ENCODE measurements at regions of chr1 and their contacts with region 1.

Region 1: GRCh38 chr1:202765721-202766120 is 42.5 kb downstream of the KDM5B start:
- DNase-seq: no peak
- ATAC-seq: no peak
- H3K4me3 ChIP-seq: no peak overlapping the region
- H3K4me3 Mint-ChIP-seq: no peak overlapping the region
- H3K27ac ChIP-seq: no peak overlapping the region
- H3K27ac Mint-ChIP-seq: no peak overlapping the region
- H3K4me1 ChIP-seq: no peaks in the 10 kb centered on the region
- H3K4me1 Mint-ChIP-seq: no peaks in the 10 kb centered on the region
- H3K27me3 ChIP-seq: no peaks in the 10 kb centered on the region
- H3K27me3 Mint-ChIP-seq: no peaks in the 10 kb centered on the region

Region 2: GRCh38 chr1:201982623-201983379 is 782.9 kb before region 1 on chr1 and contains the start of gene RNPEP:
- CTCF ChIA-PET with region 1: no interaction called
- POLR2A ChIA-PET with region 1: no interaction called
- DNase-seq: peak; percentile 18 to 68 (median 45)
- ATAC-seq: peak; percentile 83 to 87 (median 84)
- H3K4me3 ChIP-seq: peak within 1 kb of the TSS; percentile 66 to 90
- H3K4me3 Mint-ChIP-seq: peak within 1 kb of the TSS; percentile 92 to 99 (median 97)
- H3K27ac ChIP-seq: peak within 1 kb of the TSS; percentile 35
- H3K27ac Mint-ChIP-seq: peak within 1 kb of the TSS; percentile 91 to 94
- H3K4me1 ChIP-seq: peaks cover 0 to 11% of the 10 kb centered on the region in 2 experiments
- H3K4me1 Mint-ChIP-seq: peaks cover 24 to 33% (median 26%) of the 10 kb centered on the region in 3 donors
- H3K27me3 ChIP-seq: no peaks in the 10 kb centered on the region
- H3K27me3 Mint-ChIP-seq: no peaks in the 10 kb centered on the region
- total RNA-seq, gene RNPEP: 20.1 to 30.4 (median 23.9) TPM

Region 3: DNA sequence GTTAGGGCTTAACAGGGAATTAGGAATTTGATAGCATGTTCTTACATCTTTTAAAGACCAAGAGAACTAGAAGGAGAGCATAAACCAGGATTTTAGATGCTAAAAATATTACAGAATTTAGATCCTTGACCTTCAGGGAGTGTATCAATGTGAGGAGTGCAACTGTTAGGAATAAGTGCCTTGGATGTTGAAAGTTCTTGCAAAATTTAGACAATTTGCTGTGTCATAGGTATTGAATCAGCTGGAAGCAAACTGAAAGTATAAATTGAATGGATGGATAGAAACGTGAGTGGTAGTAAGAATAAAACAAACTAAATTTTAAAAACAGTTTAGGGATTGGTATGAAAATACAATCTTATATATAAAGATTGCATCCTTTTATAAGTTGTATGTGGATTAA is 389.5 kb before region 1 on chr1:
- CTCF ChIA-PET with region 1: no interaction called
- POLR2A ChIA-PET with region 1: no interaction called
- DNase-seq: no peak
- ATAC-seq: no peak
- H3K4me3 ChIP-seq: no peak overlapping the region
- H3K4me3 Mint-ChIP-seq: no peak overlapping the region
- H3K27ac ChIP-seq: no peak overlapping the region
- H3K27ac Mint-ChIP-seq: no peak overlapping the region
- H3K4me1 ChIP-seq: no peaks in the 10 kb centered on the region
- H3K4me1 Mint-ChIP-seq: peaks cover 28 to 45% (median 31%) of the 10 kb centered on the region in 3 donors
- H3K27me3 ChIP-seq: no peaks in the 10 kb centered on the region
- H3K27me3 Mint-ChIP-seq: no peaks in the 10 kb centered on the region

Region 4: GRCh38 chr1:202522983-202523382 is 242.7 kb before region 1 on chr1:
- CTCF ChIA-PET with region 1: no interaction called
- POLR2A ChIA-PET with region 1: interaction called in 1 of 2 experiments, 10 read pairs
- DNase-seq: no peak
- ATAC-seq: no peak
- H3K4me3 ChIP-seq: no peak overlapping the region
- H3K4me3 Mint-ChIP-seq: no peak overlapping the region
- H3K27ac ChIP-seq: no peak overlapping the region
- H3K27ac Mint-ChIP-seq: no peak overlapping the region
- H3K4me1 ChIP-seq: no peaks in the 10 kb centered on the region
- H3K4me1 Mint-ChIP-seq: no peaks in the 10 kb centered on the region
- H3K27me3 ChIP-seq: no peaks in the 10 kb centered on the region
- H3K27me3 Mint-ChIP-seq: no peaks in the 10 kb centered on the region

Region 5: DNA sequence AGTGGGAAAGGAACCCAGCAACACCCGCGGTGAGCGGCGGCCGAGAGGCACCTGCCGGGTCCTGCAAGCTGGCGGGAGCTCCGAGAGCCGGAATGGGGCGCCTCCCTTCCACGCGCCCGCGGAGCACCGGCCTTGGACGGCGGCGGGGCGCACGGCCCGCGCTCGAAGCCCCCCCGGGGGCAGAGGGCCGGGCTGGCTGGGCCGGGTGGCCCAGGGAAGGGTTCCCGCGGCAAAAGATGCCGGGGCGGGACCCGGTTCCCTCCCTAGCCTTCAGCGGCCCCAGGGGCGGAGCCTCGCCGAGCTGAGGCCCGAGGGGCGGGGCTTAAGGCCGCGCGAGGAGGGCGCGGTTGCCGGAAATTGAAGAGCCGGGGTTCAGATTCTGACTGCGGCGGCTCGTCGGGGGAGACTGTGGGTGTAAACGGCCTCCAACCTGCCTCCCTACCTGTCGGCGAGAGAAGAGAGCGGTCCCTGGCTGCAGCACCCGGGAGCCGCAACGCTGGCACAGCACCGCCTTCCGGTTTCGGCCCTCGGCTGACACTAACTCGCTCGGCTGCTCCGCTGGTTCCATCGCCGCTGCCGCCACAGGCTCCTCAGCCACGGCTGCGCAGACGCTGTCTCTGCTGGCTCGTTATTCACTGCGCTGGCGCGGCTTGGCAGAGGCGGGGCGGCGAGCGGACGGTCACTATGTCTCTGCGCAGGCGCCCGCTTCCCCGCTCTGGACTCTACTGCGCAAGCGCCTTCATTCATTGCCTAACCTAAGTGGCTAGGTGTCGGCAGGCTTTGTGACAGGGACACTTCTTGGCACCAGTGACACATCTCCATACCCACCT is 123.0 kb after region 1 on chr1 and contains the start of gene RABIF:
- CTCF ChIA-PET with region 1: no interaction called
- POLR2A ChIA-PET with region 1: no interaction called
- DNase-seq: peak; percentile 88 to 98 (median 96)
- ATAC-seq: peak; percentile 90 to 94 (median 92)
- H3K4me3 ChIP-seq: peak within 1 kb of the TSS; percentile 85 to 88
- H3K4me3 Mint-ChIP-seq: peak within 1 kb of the TSS; percentile 82 to 97 (median 94)
- H3K27ac ChIP-seq: peak within 1 kb of the TSS; percentile 91
- H3K27ac Mint-ChIP-seq: peak within 1 kb of the TSS; percentile 96
- H3K4me1 ChIP-seq: peaks cover 8 to 23% of the 10 kb centered on the region in 2 experiments
- H3K4me1 Mint-ChIP-seq: peaks cover 13 to 31% (median 24%) of the 10 kb centered on the region in 3 donors
- H3K27me3 ChIP-seq: no peaks in the 10 kb centered on the region
- H3K27me3 Mint-ChIP-seq: no peaks in the 10 kb centered on the region
- total RNA-seq, gene RABIF: 9.2 to 18.3 (median 15.6) TPM